ENCODE measurements at regions of chr17 and their contacts with region 1.

Region 1: GRCh38 chr17:1455797-1456599 is at the start of gene CRK:
- DNase-seq: peak; percentile 96 to 97
- ATAC-seq: peak; percentile 87
- H3K4me3 ChIP-seq: peak within 1 kb of the TSS; percentile 98
- H3K27ac ChIP-seq: peak within 1 kb of the TSS; percentile 95
- H3K4me1 ChIP-seq: peaks cover 33% of the 10 kb centered on the region
- CTCF ChIP-seq: no peak
- EP300 ChIP-seq: no peak
- POLR2A ChIP-seq: peak; percentile 63
- RAD21 ChIP-seq: peak in 1 of 2 experiments; percentile 19; a peak in 1 of 5 replicates
- polyA plus RNA-seq, gene CRK: 117 and 124 TPM in 2 replicates

Region 2: DNA sequence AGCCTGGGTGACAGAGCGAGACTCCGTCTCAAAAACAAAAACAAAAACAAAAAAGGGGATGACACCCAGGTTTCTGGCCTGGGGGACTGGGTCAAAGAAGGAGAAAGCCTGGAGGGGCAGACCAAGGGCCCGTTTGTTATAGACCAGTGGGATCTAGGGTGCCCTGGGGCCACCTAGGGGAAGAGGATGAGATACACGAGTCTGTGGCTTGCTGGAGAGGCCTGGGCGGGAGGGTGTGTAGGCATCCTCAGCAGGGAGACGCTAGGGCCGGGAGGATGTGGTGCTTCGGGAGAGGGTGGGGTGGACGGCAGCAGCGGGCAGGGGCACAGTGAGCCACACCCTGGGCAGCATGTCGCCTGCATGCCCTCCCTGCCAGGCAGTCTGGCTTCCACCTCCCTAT is 17.2 kb after region 1 on chr17:
- CTCF ChIA-PET with region 1: interaction called, 17 read pairs
- POLR2A ChIA-PET with region 1: no interaction called
- DNase-seq: no peak
- ATAC-seq: peak; percentile 35 to 51; a peak in 4 of 6 replicates
- H3K4me3 ChIP-seq: no peak overlapping the region
- H3K27ac ChIP-seq: no peak overlapping the region
- H3K4me1 ChIP-seq: no peaks in the 10 kb centered on the region
- CTCF ChIP-seq: no peak
- EP300 ChIP-seq: no peak
- POLR2A ChIP-seq: no peak
- RAD21 ChIP-seq: peak in 1 of 2 experiments; percentile 24; a peak in 2 of 5 replicates

Region 3: GRCh38 chr17:1573916-1574696 is 118.1 kb after region 1 on chr17:
- CTCF ChIA-PET with region 1: no interaction called
- POLR2A ChIA-PET with region 1: no interaction called
- DNase-seq: peak; percentile 82 to 92
- ATAC-seq: peak; percentile 73 to 87
- H3K4me3 ChIP-seq: no peak overlapping the region
- H3K27ac ChIP-seq: peak overlapping the region in 1 of 2 experiments; percentile 65; a peak in 3 of 6 replicates
- H3K4me1 ChIP-seq: peaks cover 17% of the 10 kb centered on the region
- CTCF ChIP-seq: peak; percentile 98
- EP300 ChIP-seq: no peak
- POLR2A ChIP-seq: no peak
- RAD21 ChIP-seq: peak; percentile 95 to 100